PC-9 (cell line): ENCODE measurements at regions of chr5 and their contacts with region 1.

Region 1: DNA sequence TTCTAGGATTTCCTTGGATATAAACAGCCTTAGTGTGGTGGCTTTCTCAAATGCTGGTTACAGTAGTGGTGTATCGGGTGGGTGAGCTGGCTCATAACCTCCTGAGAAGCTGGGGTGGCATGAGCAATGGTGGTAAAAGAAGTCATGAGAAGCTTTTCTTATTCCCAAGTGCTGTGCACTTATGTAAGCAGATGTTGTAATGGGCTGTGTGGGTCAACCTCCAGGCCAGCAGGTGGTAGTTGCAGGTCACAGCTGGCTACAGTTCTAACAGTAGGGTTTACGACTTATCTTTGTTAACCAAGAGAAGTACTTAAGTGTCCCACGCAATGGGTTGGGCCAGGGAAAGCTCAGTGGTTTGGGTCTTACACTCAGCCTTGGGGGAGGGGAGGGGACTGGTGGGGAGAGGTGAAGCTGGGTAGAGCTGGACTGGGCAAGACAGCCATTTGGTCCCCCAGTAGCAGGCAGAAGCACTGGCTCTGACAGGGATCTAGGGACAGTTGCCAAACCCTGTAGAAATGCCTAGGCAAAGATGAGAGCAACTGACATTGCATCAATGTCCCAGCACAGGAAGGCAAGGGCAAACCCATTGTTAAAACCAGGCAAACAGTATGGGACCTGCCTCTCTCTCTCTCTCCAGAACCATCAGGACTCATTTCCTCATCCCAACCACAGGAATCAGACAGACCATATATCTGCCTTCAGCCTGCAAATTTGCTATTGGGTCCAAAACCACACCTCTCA is 76.8 kb downstream of the RNF130 start:
- DNase-seq: no peak
- H3K4me3 ChIP-seq: no peak overlapping the region
- H3K27ac ChIP-seq: no peak overlapping the region
- H3K4me1 ChIP-seq: no peaks in the 10 kb centered on the region
- H3K27me3 ChIP-seq: no peaks in the 10 kb centered on the region
- CTCF ChIP-seq: no peak

Region 2: DNA sequence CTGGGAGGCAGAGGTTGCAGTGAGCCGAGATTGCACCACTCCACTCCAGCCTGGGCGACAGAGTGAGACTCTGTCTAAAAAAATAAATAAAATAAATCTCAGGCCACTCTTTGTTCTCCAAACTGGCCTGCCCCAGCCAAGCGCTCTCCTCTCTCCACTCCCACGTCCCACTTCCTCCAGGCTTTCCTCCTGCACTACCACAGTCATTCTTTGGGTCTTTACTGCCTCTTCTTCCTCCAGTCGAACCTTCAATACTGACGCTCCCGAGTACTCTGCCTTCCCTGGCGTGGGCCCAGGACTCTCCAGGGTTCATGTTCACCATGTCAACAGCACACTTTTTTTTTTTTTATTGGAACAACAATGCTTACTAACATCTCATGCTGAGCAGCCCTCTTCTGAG is 52.9 kb after region 1 on chr5:
- CTCF ChIA-PET with region 1: no interaction called
- POLR2A ChIA-PET with region 1: interaction called, 11 read pairs
- intact Hi-C with region 1: no loop called
- DNase-seq: no peak
- H3K4me3 ChIP-seq: no peak overlapping the region
- H3K27ac ChIP-seq: no peak overlapping the region
- H3K4me1 ChIP-seq: no peaks in the 10 kb centered on the region
- H3K27me3 ChIP-seq: no peaks in the 10 kb centered on the region
- CTCF ChIP-seq: no peak